ENCODE measurements at regions of chr16 and their contacts with region 1.

Region 1: GRCh38 chr16:70653809-70654771 is 7.7 kb downstream of the IL34 start:
- DNase-seq: peak; percentile 64 to 82
- ATAC-seq: peak; percentile 78 to 88 (median 82)
- H3K4me3 ChIP-seq: peak overlapping the region in 8 of 10 donors; percentile 1 to 42 (median 34)
- H3K27ac ChIP-seq: peak overlapping the region in 6 of 10 donors; percentile 18 to 59 (median 46)
- H3K4me1 ChIP-seq: peaks cover 0 to 12% (median 9%) of the 10 kb centered on the region in 9 donors
- H3K27me3 ChIP-seq: no peaks in the 10 kb centered on the region
- CTCF ChIP-seq: peak; percentile 81 to 93 (median 89)

Region 2: GRCh38 chr16:70162041-70162451 is 492.0 kb before region 1 on chr16:
- intact Hi-C with region 1: loop called in 1 of 10 experiments (anchors 10 kb)
- DNase-seq: no peak
- ATAC-seq: no peak
- H3K4me3 ChIP-seq: no peak overlapping the region
- H3K27ac ChIP-seq: no peak overlapping the region
- H3K4me1 ChIP-seq: peaks cover 0 to 4% (median 0%) of the 10 kb centered on the region in 9 donors
- H3K27me3 ChIP-seq: no peaks in the 10 kb centered on the region
- CTCF ChIP-seq: no peak

Region 3: GRCh38 chr16:70348991-70349390 is 305.1 kb before region 1 on chr16:
- intact Hi-C with region 1: loop called in 1 of 10 experiments (anchors 10 kb)
- DNase-seq: peak in 1 of 2 donors; percentile 21
- ATAC-seq: no peak
- H3K4me3 ChIP-seq: no peak overlapping the region
- H3K27ac ChIP-seq: peak overlapping the region in 1 of 10 donors; percentile 15
- H3K4me1 ChIP-seq: peaks cover 2 to 40% (median 36%) of the 10 kb centered on the region in 9 donors
- H3K27me3 ChIP-seq: no peaks in the 10 kb centered on the region
- CTCF ChIP-seq: no peak

Region 4: GRCh38 chr16:70375636-70376611 is 278.2 kb before region 1 on chr16:
- intact Hi-C with region 1: loop called in 3 of 10 experiments (anchors 5 to 10 kb)
- DNase-seq: no peak
- ATAC-seq: no peak
- H3K4me3 ChIP-seq: no peak overlapping the region
- H3K27ac ChIP-seq: no peak overlapping the region
- H3K4me1 ChIP-seq: peaks cover 0 to 18% (median 17%) of the 10 kb centered on the region in 9 donors
- H3K27me3 ChIP-seq: no peaks in the 10 kb centered on the region
- CTCF ChIP-seq: no peak

Region 5: DNA sequence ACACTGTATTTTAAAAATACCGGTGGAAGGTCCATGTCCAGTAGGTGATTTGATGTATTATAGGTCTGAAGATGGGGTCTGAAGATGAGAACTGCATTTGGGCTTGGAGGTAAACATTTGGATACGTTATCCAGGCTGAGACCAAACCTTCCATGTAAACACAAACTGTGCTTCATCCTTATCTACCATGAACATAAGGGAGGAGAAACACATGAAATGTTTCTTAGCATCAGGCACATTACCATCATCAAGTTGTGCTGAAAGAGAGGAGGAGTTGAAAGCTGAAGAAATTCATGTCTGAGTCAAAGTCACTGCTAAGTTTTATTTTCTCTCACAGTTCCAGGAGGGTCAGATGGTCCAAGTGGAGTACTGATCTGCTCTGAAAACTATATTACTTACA is 119.1 kb before region 1 on chr16:
- intact Hi-C with region 1: loop called in 5 of 10 experiments (anchors 2 to 10 kb)
- DNase-seq: no peak
- ATAC-seq: no peak
- H3K4me3 ChIP-seq: no peak overlapping the region
- H3K27ac ChIP-seq: no peak overlapping the region
- H3K4me1 ChIP-seq: peaks cover 0 to 4% (median 0%) of the 10 kb centered on the region in 9 donors
- H3K27me3 ChIP-seq: no peaks in the 10 kb centered on the region
- CTCF ChIP-seq: no peak

Region 6: DNA sequence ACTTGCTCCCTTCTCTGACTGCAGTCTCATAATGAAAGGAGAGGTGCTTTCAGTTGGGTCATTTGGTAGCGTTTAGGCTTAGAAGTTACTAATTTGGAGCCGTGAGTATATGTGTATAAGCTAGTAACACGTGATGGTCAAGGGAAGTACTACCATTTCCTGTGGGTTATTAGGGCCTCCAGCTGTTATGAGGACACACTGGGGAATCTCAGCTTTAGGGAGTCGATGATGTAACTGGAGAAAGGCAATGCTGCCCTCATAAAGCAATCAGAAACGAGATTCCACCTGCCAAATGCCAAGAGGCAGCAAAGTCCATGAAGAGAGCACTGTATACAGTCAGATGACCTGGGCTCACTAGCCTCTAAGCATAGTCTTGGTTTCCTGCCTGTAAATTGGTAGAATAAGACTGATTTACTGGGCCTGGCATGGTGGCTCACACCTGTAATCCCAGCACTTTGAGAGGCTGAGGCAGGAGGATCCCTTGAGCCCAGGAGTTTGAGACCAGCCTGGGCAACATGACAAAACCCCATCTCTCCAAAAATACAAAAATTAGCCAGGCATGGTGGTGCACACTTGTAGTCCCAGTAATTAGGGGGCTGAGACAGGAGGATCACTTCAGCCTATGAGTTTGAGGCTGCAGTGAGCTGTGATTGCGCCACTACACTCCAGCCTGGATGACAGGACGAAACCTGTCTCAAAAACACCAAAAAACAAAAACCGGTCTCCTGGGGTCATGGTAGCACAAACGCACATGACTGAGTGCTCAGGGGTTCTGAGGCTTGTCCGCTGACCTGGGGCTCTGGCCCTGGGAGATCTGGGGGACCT is 77.4 kb before region 1 on chr16:
- intact Hi-C with region 1: loop called in 3 of 10 experiments (anchors 1 to 10 kb)
- DNase-seq: no peak
- ATAC-seq: peak in 1 of 8 donors; percentile 16
- H3K4me3 ChIP-seq: no peak overlapping the region
- H3K27ac ChIP-seq: peak overlapping the region in 2 of 10 donors; percentile 34 to 40
- H3K4me1 ChIP-seq: peaks cover 6 to 70% (median 55%) of the 10 kb centered on the region in 9 donors
- H3K27me3 ChIP-seq: no peaks in the 10 kb centered on the region
- CTCF ChIP-seq: no peak

Region 7: GRCh38 chr16:70685938-70686375 is 31.9 kb after region 1 on chr16 and contains the start of gene MTSS2:
- intact Hi-C with region 1: no loop called
- DNase-seq: peak; percentile 86 to 89
- ATAC-seq: peak; percentile 23 to 77 (median 70)
- H3K4me3 ChIP-seq: peak within 1 kb of the TSS; percentile 64 to 92 (median 76)
- H3K27ac ChIP-seq: peak within 1 kb of the TSS; percentile 58 to 94 (median 85)
- H3K4me1 ChIP-seq: peaks cover 61 to 91% (median 84%) of the 10 kb centered on the region in 9 donors
- H3K27me3 ChIP-seq: peaks cover 0 to 9% (median 0%) of the 10 kb centered on the region in 7 donors
- CTCF ChIP-seq: no peak
- total RNA-seq, gene MTSS2: 39.8 to 121 (median 62.1) TPM

Measured in heart right ventricle (tissue), 16 donors.